ENCODE measurements at regions of chr5 and their contacts with region 1.

Region 1: GRCh38 chr5:181223058-181223728 is at the start of gene TRIM41:
- DNase-seq: peak; percentile 94 to 99
- H3K4me3 ChIP-seq: peak within 1 kb of the TSS; percentile 79 to 81
- H3K27ac ChIP-seq: peak within 1 kb of the TSS; percentile 93 to 94
- H3K4me1 ChIP-seq: peaks cover 6 to 7% of the 10 kb centered on the region in 2 donors
- H3K27me3 ChIP-seq: no peaks in the 10 kb centered on the region
- CTCF ChIP-seq: no peak
- total RNA-seq, gene TRIM41: 105 TPM

Region 2: GRCh38 chr5:180960209-180960608 is 263.0 kb before region 1 on chr5:
- intact Hi-C with region 1: no loop called
- DNase-seq: no peak
- H3K4me3 ChIP-seq: no peak overlapping the region
- H3K27ac ChIP-seq: no peak overlapping the region
- H3K4me1 ChIP-seq: no peaks in the 10 kb centered on the region
- H3K27me3 ChIP-seq: no peaks in the 10 kb centered on the region
- CTCF ChIP-seq: no peak

Region 3: GRCh38 chr5:181088289-181088688 is 134.9 kb before region 1 on chr5:
- intact Hi-C with region 1: no loop called
- DNase-seq: no peak
- H3K4me3 ChIP-seq: no peak overlapping the region
- H3K27ac ChIP-seq: no peak overlapping the region
- H3K4me1 ChIP-seq: no peaks in the 10 kb centered on the region
- H3K27me3 ChIP-seq: no peaks in the 10 kb centered on the region
- CTCF ChIP-seq: no peak

Region 4: DNA sequence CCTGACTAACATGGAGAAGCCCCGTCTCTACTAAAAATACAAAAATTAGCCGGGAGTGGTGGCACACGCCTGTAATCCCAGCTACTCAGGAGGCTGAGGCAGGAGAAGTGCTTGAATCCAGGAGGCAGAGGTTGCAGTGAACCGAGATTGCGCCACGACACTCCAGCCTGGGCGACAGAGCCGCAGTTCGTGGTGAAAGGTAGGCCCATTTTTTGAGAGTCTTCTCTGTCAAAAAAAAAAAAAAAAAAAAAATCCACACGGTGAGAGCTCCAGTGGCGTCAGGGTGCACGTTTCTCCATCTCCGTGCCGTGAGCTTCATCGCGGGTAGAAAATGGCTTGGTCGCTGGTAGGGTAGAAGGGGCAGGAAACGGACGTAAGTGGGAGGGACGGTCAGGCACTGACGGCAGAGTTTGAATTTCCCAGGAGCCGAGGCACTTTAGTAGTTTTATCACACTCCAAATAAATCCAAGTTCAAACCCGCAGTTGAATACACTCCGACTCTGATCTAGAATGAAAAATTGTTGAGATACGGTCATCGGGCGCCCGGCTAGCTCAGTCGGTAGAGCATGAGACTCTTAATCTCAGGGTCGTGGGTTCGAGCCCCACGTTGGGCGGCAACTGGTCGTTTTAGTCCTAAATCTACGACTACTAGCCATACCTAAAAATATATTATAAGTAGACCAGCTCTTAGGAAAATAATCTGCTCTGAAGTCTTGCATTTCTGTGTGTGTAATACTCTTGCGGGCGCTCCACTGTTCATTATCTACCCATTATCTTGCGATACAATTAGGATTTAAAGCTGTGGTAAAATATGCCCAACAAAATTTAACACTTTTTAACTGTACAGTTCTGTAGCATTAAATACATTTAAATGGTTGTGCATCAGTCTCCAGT is 15.7 kb before region 1 on chr5:
- intact Hi-C with region 1: loop called (anchors 1 kb)
- DNase-seq: peak in 1 of 2 donors; percentile 90
- H3K4me3 ChIP-seq: peak overlapping the region; percentile 53 to 72
- H3K27ac ChIP-seq: peak overlapping the region; percentile 87 to 88
- H3K4me1 ChIP-seq: peaks cover 4 to 13% of the 10 kb centered on the region in 2 donors
- H3K27me3 ChIP-seq: no peaks in the 10 kb centered on the region
- CTCF ChIP-seq: no peak

Region 5: DNA sequence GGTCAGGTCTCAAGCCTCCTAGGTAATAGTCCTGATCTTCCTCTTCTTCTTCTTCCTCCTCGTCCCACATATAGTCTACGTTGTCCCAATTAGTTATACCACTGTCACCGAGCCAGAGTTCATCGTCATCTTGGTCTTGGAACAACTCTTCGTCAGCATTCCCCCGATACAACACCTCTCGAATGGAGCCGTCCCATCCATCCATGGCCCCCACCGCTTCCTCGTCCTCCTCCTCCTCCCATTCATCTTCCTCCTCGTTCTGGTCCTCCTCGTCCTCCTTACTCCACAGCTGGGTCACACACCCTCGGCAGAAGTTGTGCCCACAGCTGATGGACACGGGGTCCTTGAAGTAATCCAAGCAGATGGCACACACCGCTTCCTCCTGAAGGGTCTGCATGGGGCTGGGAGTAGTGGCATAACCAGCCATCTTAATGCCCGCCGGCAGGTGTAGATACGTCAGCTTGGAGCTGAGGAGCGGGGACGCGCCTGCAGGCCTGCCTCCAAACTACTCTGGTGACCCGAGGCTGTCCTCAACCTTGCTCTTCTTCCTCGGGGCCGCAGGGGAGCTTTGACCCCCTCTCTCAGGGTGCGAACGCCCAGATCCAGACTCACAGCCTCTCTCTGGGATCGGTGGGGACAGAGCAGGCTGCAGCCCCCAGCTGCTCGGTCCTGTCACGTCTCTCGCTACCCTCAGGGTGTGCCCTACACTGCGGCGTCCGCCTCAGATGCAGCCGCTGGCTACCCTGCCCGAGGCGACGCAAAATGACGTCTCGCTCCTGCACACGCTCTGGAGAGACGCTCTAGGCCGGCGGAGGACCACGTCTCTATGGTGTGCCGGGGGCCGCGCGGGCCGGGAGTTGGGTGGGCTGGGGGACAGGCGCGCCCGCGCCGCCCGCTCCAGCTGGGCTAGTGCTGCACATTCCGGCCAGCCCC is 37.5 kb after region 1 on chr5 and contains the start of gene TRIM52:
- intact Hi-C with region 1: loop called (anchors 1 kb)
- DNase-seq: peak; percentile 56 to 95
- H3K4me3 ChIP-seq: peak within 1 kb of the TSS; percentile 74 to 99
- H3K27ac ChIP-seq: peak within 1 kb of the TSS; percentile 97 to 100
- H3K4me1 ChIP-seq: peaks cover 2 to 27% of the 10 kb centered on the region in 2 donors
- H3K27me3 ChIP-seq: no peaks in the 10 kb centered on the region
- CTCF ChIP-seq: peak in 1 of 3 experiments; percentile 9
- total RNA-seq, gene TRIM52: 21.2 TPM

Measured in ascending aorta (tissue), 2 donors.